ENCODE measurements at regions of chr6 and their contacts with region 1.

Region 1: GRCh38 chr6:85593438-85594196 is at the start of gene SNX14:
- DNase-seq: peak; percentile 98
- H3K4me3 ChIP-seq: peak within 1 kb of the TSS; percentile 68 to 87 (median 78)
- H3K27ac ChIP-seq: peak within 1 kb of the TSS; percentile 82 to 99 (median 98)
- H3K4me1 ChIP-seq: peaks cover 9 to 45% (median 32%) of the 10 kb centered on the region in 6 donors
- H3K27me3 ChIP-seq: no peaks in the 10 kb centered on the region
- CTCF ChIP-seq: peak in 6 of 11 experiments; percentile 13 to 49 (median 26)
- POLR2A ChIP-seq: peak in 2 of 3 donors; percentile 49 to 88
- total RNA-seq, gene SNX14: 63.8 to 170 (median 87.4) TPM

Region 2: DNA sequence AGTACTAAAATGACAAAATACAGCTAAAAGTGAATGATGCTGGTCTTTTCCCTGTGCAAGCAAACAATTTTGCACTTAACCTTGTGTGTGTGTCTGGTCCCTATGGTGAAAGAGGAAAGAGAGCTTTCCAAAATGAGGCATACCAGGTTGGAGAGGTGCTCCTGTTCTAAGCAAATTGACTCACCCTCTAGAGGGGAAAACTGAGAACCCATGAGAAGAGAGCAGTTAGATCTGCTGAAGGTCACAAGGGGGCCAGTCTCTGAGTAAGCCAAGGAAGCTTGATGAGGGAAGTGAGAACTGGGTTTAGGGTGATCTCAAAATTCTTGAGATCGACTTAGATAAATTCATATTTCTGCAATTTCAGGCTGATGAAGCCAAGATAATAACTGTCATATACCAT is 671.7 kb before region 1 on chr6:
- intact Hi-C with region 1: no loop called
- DNase-seq: no peak
- H3K4me3 ChIP-seq: no peak overlapping the region
- H3K27ac ChIP-seq: no peak overlapping the region
- H3K4me1 ChIP-seq: no peaks in the 10 kb centered on the region
- H3K27me3 ChIP-seq: no peaks in the 10 kb centered on the region
- CTCF ChIP-seq: no peak
- POLR2A ChIP-seq: no peak

Region 3: DNA sequence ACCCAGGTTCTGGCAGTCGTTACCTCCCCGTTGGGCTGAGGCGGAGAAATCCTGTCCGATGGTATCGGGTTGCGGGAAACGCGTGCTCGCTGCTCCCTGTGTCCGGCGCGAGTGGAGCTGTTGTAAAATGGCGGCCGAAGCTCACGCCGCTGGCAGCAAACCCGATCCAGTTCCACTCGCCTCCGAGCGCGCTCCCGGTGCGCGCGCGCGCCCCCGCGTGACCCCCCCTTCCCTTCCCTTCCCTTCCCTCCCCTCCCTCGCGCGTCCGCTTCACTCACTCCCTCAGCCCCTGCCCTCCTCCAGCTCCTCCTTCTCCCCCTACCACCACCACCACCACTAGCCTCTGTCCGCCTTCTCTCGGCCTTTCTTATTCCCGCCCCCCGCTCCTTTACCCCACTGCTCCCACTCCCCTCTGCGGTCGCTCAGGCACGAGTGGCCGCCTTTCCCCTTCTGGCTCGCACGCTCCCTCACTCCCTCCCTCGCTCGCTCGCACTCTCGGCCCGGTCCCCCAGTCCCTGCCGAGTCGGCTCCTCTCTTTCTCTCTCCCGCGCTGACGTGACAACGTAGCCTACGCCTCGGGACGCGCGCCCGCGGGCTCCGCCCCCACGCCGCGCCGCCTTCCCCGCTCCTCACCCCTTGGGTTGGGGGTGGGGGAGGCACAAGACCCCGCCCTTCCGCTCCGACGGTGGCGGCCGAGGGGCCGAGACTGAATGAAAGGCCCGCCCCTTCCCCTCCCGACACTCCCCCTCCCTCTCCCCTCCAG is 49.3 kb after region 1 on chr6 and contains the start of gene SYNCRIP:
- intact Hi-C with region 1: loop called (anchors 10 kb)
- DNase-seq: peak; percentile 100
- H3K4me3 ChIP-seq: peak within 1 kb of the TSS; percentile 92 to 99 (median 98)
- H3K27ac ChIP-seq: peak within 1 kb of the TSS; percentile 97 to 99 (median 98)
- H3K4me1 ChIP-seq: peaks cover 32 to 54% (median 48%) of the 10 kb centered on the region in 6 donors
- H3K27me3 ChIP-seq: no peaks in the 10 kb centered on the region
- CTCF ChIP-seq: peak in 3 of 11 experiments; percentile 3 to 26 (median 8)
- POLR2A ChIP-seq: peak in 2 of 3 donors; percentile 81 to 92
- total RNA-seq, gene SYNCRIP: 60.0 to 92.1 (median 75.7) TPM

Region 4: DNA sequence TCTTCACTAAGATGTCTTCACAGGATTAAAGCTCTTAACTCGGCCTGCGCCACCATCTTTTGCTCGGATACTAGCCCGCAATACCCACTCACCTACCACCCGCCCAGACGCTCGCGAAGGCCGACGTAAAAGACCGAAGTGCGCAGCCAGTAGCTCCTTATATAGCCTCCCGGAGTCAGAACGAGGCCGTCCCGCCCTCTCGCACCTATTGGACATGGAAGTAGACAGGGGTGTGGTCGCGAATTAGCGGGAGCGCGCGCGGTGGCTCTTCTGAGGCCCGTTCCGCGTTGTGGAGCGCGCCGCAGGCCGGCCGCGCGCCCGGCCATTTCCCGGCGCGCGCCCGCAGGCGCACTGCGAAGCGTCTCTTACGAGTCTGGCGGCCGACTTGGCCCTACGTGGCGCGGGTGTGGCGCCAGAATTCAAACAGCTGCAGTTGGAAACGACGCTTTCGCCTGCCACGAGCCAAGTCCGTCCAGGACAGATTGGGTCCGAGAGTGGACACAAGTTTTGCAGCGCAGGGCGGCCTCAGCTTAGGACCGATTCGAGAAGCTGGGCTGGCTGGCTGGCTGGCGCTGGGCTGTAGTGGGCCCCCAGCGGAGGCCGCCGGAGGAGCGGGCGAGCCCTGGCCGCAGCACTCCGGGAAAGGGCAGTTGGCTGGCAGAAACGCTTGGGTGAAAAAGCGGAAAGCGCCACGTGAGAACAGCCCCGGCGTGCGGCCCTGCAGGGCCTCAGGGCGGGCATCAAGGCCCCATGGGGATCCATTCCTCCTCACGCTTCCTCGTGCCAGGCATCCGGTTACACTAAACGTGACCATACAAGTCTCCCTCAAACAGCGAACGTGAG is 85.2 kb after region 1 on chr6:
- intact Hi-C with region 1: loop called (anchors 10 kb)
- DNase-seq: peak; percentile 99
- H3K4me3 ChIP-seq: peak overlapping the region; percentile 61 to 87 (median 80)
- H3K27ac ChIP-seq: peak overlapping the region; percentile 66 to 97 (median 95)
- H3K4me1 ChIP-seq: peaks cover 24 to 60% (median 46%) of the 10 kb centered on the region in 6 donors
- H3K27me3 ChIP-seq: no peaks in the 10 kb centered on the region
- CTCF ChIP-seq: peak in 2 of 11 experiments; percentile 0 to 45
- POLR2A ChIP-seq: peak; percentile 96 to 99 (median 98)

Region 5: DNA sequence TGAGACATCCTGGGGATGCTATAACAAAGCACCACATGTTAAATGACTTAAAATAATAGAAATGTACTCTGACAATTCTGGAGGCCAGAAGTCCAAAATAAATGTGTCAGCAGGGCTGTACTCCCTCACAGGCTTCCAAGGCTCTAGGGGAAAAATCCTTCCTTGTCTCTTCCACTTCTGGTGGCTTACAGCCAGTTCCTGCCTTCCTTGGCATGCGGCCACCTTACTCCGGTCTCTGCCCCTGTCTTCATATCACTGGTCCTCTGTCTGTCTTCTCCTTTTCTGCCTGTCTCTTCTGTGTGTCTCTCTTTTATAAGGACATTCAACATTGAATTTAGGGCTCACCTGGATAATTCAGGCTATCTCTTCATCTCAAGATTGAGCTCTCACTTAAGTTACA is 204.4 kb after region 1 on chr6:
- intact Hi-C with region 1: no loop called
- DNase-seq: no peak
- H3K4me3 ChIP-seq: no peak overlapping the region
- H3K27ac ChIP-seq: no peak overlapping the region
- H3K4me1 ChIP-seq: no peaks in the 10 kb centered on the region
- H3K27me3 ChIP-seq: no peaks in the 10 kb centered on the region
- CTCF ChIP-seq: no peak
- POLR2A ChIP-seq: no peak